Panc1 (cell line): ENCODE measurements at regions of chr4 and their contacts with region 1.

Region 1: DNA sequence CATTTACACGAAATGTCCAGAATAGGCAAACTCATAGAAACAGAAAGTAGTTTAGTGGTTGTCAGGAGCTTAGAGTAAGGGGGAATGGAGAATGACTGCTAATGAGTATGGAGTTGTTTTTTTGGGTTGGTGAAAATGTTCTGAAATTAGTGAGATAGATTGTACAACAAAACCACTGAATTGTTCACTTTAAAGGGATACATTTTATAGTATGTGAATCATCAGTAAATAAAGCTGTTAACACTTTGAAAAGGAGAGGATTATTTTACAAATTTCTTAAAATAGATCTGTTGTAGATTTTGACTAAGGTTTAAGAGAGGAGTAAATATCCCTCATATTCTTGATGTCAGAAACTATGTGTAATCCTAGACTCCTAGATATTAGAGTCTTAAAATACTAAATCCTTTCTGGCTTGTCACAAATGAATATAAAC is 82.7 kb downstream of the RAPGEF2 start:
- DNase-seq: no peak
- ATAC-seq: no peak
- H3K4me3 ChIP-seq: no peak overlapping the region
- H3K27ac ChIP-seq: no peak overlapping the region
- H3K4me1 ChIP-seq: no peaks in the 10 kb centered on the region
- H3K27me3 ChIP-seq: no peaks in the 10 kb centered on the region
- CTCF ChIP-seq: no peak

Region 2: DNA sequence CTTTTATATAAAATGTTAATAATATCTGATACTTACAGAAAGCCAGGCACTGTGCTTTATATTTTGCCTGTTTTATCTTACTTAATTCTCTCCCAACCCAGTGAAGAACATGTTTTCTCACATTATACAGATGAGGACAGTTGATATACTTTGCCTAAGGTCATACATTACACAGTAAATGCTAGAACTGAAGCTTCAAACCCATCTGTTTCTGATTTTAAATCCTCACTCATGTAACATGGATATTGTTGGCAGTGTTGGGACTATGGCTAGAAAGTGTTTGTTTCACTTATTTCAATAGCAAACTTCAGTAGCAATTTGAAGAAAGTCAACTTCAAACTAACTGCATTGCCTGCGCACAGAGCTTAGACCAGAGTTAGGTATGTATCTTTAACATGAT is 25.4 kb before region 1 on chr4:
- CTCF ChIA-PET with region 1: no interaction called
- POLR2A ChIA-PET with region 1: interaction called, 10 read pairs
- in situ Hi-C with region 1: no loop called
- intact Hi-C with region 1: no loop called
- DNase-seq: no peak
- ATAC-seq: no peak
- H3K4me3 ChIP-seq: no peak overlapping the region
- H3K27ac ChIP-seq: no peak overlapping the region
- H3K4me1 ChIP-seq: no peaks in the 10 kb centered on the region
- H3K27me3 ChIP-seq: no peaks in the 10 kb centered on the region
- CTCF ChIP-seq: no peak

Region 3: GRCh38 chr4:159435561-159436023 is 250.0 kb after region 1 on chr4:
- CTCF ChIA-PET with region 1: no interaction called
- POLR2A ChIA-PET with region 1: no interaction called
- in situ Hi-C with region 1: no loop called
- intact Hi-C with region 1: no loop called
- DNase-seq: no peak
- ATAC-seq: no peak
- H3K4me3 ChIP-seq: no peak overlapping the region
- H3K27ac ChIP-seq: no peak overlapping the region
- H3K4me1 ChIP-seq: no peaks in the 10 kb centered on the region
- H3K27me3 ChIP-seq: no peaks in the 10 kb centered on the region
- CTCF ChIP-seq: no peak